Head of caudate nucleus (tissue), 42 donors: ENCODE measurements at regions of chr7 and their contacts with region 1.

Region 1: GRCh38 chr7:17301471-17302456 is 3.3 kb downstream of the AHR start:
- DNase-seq: peak in 36 of 42 donors; percentile 5 to 89 (median 58)

Region 2: DNA sequence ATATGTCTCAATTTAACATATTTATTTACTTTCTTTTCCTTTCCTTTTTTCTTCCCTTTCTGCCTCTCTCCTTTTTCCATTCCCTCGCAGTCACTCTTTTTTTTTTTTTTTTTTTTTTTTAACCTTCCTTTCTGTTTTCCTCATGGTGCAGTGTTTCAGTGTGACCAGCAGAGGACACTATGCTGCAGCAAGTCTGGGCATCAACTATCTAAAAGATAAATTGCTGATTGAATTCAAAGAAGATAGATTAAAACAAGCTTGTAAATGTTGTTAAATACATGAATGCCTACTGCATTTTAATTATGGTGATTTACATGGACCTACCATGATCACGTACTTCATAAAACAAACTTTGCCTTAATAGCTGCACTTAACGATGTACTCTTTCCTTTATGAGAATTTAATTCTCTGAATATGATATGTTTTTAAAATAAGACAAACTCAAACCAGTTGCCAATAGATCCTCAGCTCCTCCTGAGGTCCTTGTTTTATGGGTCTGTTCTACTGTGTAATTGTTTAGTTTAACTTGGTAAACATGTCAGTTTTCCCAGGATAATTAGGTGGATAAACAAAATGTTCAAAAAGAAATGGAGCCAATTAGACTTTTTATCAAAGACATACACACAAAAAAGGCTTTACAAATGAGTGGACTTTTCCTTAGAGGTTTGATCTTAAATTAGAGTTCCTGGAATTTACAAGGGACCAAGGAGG is 319.0 kb before region 1 on chr7:
- intact Hi-C with region 1: loop called (anchors 5 kb)
- DNase-seq: peak in 37 of 42 donors; percentile 4 to 71 (median 36)

Region 3: GRCh38 chr7:17408245-17408903 is 106.6 kb after region 1 on chr7:
- intact Hi-C with region 1: no loop called
- DNase-seq: no peak